ENCODE measurements at regions of chr5 and their contacts with region 1.

Region 1: GRCh38 chr5:80959768-80960442 is at the start of gene RASGRF2:
- DNase-seq: peak; percentile 66
- H3K4me3 ChIP-seq: peak within 1 kb of the TSS; percentile 49
- H3K27ac ChIP-seq: peak within 1 kb of the TSS; percentile 29
- H3K4me1 ChIP-seq: no peaks in the 10 kb centered on the region
- H3K27me3 ChIP-seq: peaks cover 16% of the 10 kb centered on the region
- CTCF ChIP-seq: no peak
- total RNA-seq, gene RASGRF2: 2.8 to 3.5 TPM

Region 2: GRCh38 chr5:80895523-80895922 is 64.4 kb before region 1 on chr5:
- intact Hi-C with region 1: no loop called
- DNase-seq: no peak
- H3K4me3 ChIP-seq: no peak overlapping the region
- H3K27ac ChIP-seq: no peak overlapping the region
- H3K4me1 ChIP-seq: no peaks in the 10 kb centered on the region
- H3K27me3 ChIP-seq: no peaks in the 10 kb centered on the region
- CTCF ChIP-seq: no peak

Region 3: DNA sequence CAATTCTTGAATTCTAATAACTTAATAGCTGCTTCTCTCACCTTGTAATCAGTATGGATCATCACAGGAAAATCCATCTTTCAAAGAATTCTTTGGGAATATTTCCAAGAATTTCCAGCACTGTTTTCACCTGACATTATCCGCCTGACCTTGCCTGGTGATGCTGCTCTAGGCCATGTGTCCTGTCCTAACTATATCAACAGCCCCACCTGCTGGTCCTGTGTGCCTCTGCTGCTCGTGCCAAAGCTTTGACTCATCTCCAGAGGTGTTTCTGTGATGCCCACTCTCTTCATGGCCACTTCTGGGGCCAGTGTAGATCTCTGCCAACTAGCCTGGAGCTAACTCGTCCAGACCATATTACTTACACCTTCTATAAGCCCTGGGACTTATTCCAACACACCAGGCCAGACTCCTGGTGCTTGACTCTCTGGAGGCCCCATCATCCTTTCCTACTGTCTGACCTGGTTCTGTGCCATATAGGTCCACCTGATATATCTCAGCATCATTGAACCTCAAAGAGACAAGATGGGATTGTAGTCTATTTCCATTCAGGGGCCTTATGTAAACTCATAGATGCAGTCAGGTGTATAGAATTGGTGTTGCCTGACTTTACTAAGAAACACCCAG is 205.7 kb after region 1 on chr5:
- intact Hi-C with region 1: loop called (anchors 10 kb)
- DNase-seq: peak; percentile 61
- H3K4me3 ChIP-seq: no peak overlapping the region
- H3K27ac ChIP-seq: no peak overlapping the region
- H3K4me1 ChIP-seq: no peaks in the 10 kb centered on the region
- H3K27me3 ChIP-seq: no peaks in the 10 kb centered on the region
- CTCF ChIP-seq: peak; percentile 43

Measured in colonic mucosa (tissue), 4 donors.